GM12878 (cell line): ENCODE measurements at regions of chr15 and their contacts with region 1.

Region 1: DNA sequence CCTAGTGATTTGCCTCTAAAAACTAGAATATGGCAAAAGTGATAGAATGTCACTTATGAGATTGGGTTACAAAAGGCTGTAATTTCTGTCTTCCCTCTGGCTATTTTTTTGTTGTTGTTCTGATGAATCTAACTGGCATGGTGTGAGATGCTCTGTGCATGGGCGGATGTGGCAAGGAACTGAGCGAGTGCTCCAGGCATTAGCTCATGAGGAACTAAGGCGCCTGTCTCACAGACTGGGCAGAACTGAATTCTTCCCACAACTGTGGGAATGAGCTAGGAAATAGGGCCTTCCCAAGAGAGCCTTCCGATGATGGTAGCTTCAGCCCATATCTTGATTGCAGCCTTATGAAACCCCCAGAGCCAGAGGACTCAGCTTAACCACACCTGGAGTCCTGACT is 222.5 kb downstream of the NR2F2 start:
- DNase-seq: no peak
- ATAC-seq: no peak
- H3K4me3 ChIP-seq: no peak overlapping the region
- H3K27ac ChIP-seq: no peak overlapping the region
- H3K4me1 ChIP-seq: no peaks in the 10 kb centered on the region
- H3K27me3 ChIP-seq: no peaks in the 10 kb centered on the region
- CTCF ChIP-seq: no peak
- EP300 ChIP-seq: no peak
- POLR2A ChIP-seq: no peak
- RAD21 ChIP-seq: no peak

Region 2: GRCh38 chr15:96500508-96500907 is 52.5 kb before region 1 on chr15:
- CTCF ChIA-PET with region 1: no interaction called
- POLR2A ChIA-PET with region 1: no interaction called
- RAD21 ChIA-PET with region 1: no interaction called
- SMC1A ChIA-PET with region 1: no interaction called
- in situ Hi-C with region 1: loop called (anchors 5 kb)
- intact Hi-C with region 1: no loop called
- DNase-seq: no peak
- ATAC-seq: no peak
- H3K4me3 ChIP-seq: no peak overlapping the region
- H3K27ac ChIP-seq: no peak overlapping the region
- H3K4me1 ChIP-seq: no peaks in the 10 kb centered on the region
- H3K27me3 ChIP-seq: no peaks in the 10 kb centered on the region
- CTCF ChIP-seq: no peak
- EP300 ChIP-seq: no peak
- POLR2A ChIP-seq: no peak
- RAD21 ChIP-seq: no peak

Region 3: DNA sequence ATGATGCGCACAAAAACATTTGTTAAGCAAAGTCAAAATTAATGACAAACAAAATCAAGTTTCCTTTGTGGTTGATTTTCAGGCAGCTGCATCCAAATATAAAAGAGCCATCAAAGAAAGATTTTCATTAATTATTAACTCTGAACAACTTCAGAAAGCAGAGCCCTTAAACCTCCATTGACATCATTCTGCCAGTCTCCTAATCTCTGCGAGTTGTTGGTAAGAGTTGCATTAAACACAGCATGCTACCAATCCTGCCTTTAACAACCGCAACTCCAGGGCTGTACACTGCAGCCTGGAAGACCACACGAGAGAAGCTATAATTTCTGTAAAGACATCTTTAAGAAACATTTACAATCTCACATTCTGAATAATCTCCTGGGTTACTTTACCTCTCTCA is 17.9 kb before region 1 on chr15:
- CTCF ChIA-PET with region 1: no interaction called
- POLR2A ChIA-PET with region 1: no interaction called
- RAD21 ChIA-PET with region 1: no interaction called
- SMC1A ChIA-PET with region 1: no interaction called
- in situ Hi-C with region 1: no loop called
- intact Hi-C with region 1: no loop called
- DNase-seq: no peak
- ATAC-seq: peak; percentile 37; the same call in 1 of the 3 replicates
- H3K4me3 ChIP-seq: no peak overlapping the region
- H3K27ac ChIP-seq: no peak overlapping the region
- H3K4me1 ChIP-seq: no peaks in the 10 kb centered on the region
- H3K27me3 ChIP-seq: no peaks in the 10 kb centered on the region
- CTCF ChIP-seq: no peak
- EP300 ChIP-seq: no peak
- POLR2A ChIP-seq: no peak
- RAD21 ChIP-seq: no peak